HCT116 (cell line): ENCODE measurements at regions of chr4 and their contacts with region 1.

Region 1: DNA sequence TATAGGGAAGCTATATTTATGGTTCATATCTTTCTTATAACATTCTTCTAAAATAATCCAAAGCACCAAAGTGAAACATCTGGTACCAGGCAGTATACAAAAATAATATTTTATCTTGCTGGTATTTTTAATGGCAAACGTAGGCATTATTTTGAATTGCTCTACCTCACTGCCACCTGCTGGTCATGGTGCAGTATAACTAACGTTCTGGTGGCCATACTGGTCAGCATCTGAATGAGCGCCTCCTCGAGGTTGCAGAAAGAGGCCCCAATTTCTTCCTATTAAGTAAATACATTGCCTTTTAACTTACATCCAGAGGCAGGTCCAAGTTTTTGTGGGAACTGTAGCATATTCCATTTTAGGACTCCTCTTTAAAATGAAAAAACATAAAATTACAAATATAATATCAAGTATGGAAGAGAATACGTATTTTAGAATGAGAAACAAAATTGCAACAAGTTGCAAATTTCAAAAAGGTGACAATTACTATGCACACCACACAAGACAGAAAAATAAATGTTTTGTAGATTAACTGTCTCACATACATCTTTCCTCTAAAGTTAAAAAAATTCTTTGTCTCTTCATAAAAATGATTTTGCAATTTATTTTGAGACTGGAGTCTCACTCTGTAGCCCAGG is 22.9 kb upstream of the CWH43 start:
- DNase-seq: peak; percentile 81
- ATAC-seq: peak; percentile 94
- H3K4me3 ChIP-seq: no peak overlapping the region
- H3K27ac ChIP-seq: no peak overlapping the region
- H3K4me1 ChIP-seq: no peaks in the 10 kb centered on the region
- H3K27me3 ChIP-seq: no peaks in the 10 kb centered on the region
- CTCF ChIP-seq: peak; percentile 98 to 99 (median 99)
- POLR2A ChIP-seq: no peak
- RAD21 ChIP-seq: peak; percentile 97

Region 2: GRCh38 chr4:48445704-48446103 is 517.5 kb before region 1 on chr4:
- CTCF ChIA-PET with region 1: no interaction called
- POLR2A ChIA-PET with region 1: no interaction called
- RAD21 ChIA-PET with region 1: no interaction called
- intact Hi-C with region 1: loop called (anchors 5 kb)
- DNase-seq: no peak
- ATAC-seq: no peak
- H3K4me3 ChIP-seq: no peak overlapping the region
- H3K27ac ChIP-seq: no peak overlapping the region
- H3K4me1 ChIP-seq: no peaks in the 10 kb centered on the region
- H3K27me3 ChIP-seq: no peaks in the 10 kb centered on the region
- CTCF ChIP-seq: peak; percentile 24 to 40 (median 29); a peak in 4 of 6 replicates
- POLR2A ChIP-seq: no peak
- RAD21 ChIP-seq: peak; percentile 41; the same call in 1 of the 2 replicates

Region 3: DNA sequence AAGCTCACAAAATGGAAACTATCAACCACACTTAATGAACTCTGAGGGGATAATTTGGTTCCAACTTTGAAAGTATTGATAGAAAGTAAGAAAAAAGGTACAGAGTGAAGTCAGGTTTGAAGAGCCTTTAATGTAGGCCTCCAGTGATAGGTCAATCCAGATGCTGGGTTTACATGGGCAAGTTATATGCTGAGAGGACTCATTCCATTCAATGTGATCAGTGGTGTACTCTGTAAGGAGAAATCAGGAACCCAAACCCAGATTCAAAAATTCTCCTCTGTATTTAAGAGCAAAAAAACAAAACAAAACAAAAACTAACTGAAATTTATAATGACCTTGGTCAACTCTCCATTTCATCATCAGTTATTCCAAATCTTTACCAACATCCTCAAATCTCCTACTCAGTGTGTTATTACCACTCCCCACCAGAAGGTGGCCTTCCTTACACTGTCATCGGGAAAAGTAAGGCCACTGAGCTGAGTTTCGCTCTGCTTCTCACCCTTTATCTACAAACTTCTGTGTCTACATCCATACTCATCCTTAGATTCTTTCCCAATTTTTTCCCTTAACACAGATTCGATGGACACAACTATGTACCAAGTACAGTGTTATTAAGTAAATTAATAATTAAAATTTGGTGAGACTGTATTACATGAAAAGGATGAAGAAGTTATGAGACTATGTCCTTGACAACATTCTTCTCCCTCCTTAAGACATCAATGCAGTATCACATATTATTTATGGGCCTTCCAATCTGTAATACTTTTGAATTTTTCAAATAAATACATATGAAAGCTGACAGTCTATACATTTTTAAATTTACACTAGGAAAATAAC is 384.8 kb before region 1 on chr4:
- CTCF ChIA-PET with region 1: interaction called, 4 read pairs
- POLR2A ChIA-PET with region 1: no interaction called
- RAD21 ChIA-PET with region 1: no interaction called
- intact Hi-C with region 1: loop called (anchors 1 kb)
- DNase-seq: peak; percentile 36
- ATAC-seq: peak; percentile 91
- H3K4me3 ChIP-seq: no peak overlapping the region
- H3K27ac ChIP-seq: no peak overlapping the region
- H3K4me1 ChIP-seq: no peaks in the 10 kb centered on the region
- H3K27me3 ChIP-seq: no peaks in the 10 kb centered on the region
- CTCF ChIP-seq: peak; percentile 78
- POLR2A ChIP-seq: no peak
- RAD21 ChIP-seq: peak; percentile 85

Region 4: DNA sequence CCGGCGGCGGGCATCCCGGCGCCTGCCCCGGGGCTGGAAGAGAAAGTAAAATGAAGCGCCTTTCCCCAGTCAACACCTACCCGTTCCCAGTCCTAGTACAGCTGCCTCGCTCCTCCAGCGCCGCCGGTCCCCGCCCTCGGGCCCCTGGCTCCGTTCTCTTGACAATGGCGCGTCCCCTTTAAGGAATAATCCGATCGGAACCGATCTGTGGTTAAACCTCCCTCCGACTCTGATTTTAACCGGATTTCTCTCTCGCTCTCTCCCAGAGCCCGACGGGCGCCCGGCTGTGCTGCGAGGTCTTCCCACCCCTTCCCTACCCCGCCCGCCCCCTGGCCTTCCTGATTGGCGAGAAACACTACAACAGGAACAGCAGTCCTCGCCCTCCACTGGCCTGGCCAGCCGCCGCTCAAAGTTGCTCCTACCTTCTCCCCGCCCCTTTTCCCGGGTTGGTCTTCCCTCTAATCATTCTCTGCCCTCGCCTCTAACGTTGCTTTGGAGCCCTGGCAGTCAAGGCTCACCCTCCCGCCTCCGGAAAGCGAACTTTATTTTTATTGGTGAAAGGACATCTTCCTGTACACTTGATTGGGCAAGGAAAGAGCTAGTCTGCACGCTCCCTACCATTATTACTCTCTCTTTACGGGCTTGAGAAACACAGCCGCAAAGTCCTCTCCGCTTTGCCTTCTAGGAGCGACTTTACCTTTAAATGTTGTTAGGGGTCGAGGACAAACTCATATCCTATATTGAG is 183.0 kb before region 1 on chr4 and contains the start of gene FRYL:
- CTCF ChIA-PET with region 1: no interaction called
- POLR2A ChIA-PET with region 1: no interaction called
- RAD21 ChIA-PET with region 1: no interaction called
- intact Hi-C with region 1: loop called (anchors 5 kb)
- DNase-seq: peak; percentile 99
- ATAC-seq: peak; percentile 93
- H3K4me3 ChIP-seq: peak within 1 kb of the TSS; percentile 68 to 71
- H3K27ac ChIP-seq: peak within 1 kb of the TSS; percentile 86
- H3K4me1 ChIP-seq: peaks cover 8 to 24% of the 10 kb centered on the region in 2 experiments
- H3K27me3 ChIP-seq: no peaks in the 10 kb centered on the region
- CTCF ChIP-seq: no peak
- POLR2A ChIP-seq: peak; percentile 75
- RAD21 ChIP-seq: no peak
- total RNA-seq, gene FRYL: 47.7 TPM

Region 5: DNA sequence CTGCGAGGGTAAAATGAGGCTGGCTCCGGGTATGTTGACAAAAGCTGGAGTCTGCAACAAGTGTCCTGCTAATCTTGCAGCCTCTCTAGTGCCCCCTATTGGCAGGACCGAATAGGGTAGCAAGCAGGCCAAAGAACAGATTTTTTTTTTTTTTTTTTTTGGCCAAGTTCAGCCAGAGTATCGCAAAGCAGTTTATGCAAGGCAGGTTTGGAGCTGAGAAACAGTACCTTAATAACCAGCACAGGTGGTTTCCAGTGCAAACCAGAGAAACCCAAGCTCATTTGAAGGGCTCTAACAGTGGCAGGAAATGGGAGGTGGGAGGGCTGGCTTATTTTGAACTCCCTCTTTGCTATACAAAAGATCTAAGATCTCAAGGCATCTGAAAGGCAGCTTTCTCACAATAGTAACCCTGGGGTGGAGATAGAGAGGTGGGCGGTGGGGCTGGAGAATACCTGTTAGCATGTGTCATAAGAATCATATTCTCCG is 18.4 kb before region 1 on chr4:
- CTCF ChIA-PET with region 1: interaction called, 23 read pairs
- POLR2A ChIA-PET with region 1: no interaction called
- RAD21 ChIA-PET with region 1: no interaction called
- intact Hi-C with region 1: no loop called
- DNase-seq: no peak
- ATAC-seq: peak; percentile 70
- H3K4me3 ChIP-seq: peak overlapping the region in 1 of 2 experiments; percentile 24; a peak in 3 of 4 replicates
- H3K27ac ChIP-seq: peak overlapping the region; percentile 58
- H3K4me1 ChIP-seq: peaks cover 12 to 27% of the 10 kb centered on the region in 2 experiments
- H3K27me3 ChIP-seq: no peaks in the 10 kb centered on the region
- CTCF ChIP-seq: peak; percentile 45 to 90 (median 88); a peak in 5 of 6 replicates
- POLR2A ChIP-seq: no peak
- RAD21 ChIP-seq: peak; percentile 39